GM10248 (cell line): ENCODE measurements at regions of chr5 and their contacts with region 1.

Region 1: DNA sequence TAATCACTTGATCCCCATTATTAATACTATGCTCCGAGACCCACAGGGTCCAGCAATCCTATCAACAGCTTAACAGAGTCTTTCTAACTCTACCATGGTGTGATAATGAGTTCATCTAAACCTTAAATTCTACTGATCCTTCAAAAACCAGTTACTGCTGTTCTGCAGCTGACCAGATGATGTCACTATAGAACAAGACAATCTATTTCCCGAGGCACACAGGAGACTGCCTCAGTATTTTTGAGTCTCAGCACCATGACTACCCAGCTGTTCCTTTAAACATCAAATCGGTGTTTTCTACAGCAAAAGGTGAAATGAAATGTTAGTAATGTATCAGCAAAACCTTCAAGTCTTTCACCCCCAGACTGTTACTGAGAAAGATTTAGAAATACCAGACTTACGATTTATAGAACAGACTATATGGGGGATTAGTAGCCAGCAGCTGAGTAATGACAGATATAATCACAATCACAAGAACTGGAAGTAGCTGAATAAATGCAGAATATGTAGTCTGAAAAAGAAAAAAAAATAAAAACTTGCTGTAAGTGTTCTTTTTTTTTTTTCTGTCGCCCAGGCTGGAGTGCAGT is 16.9 kb downstream of the DNAJC18 start:
- DNase-seq: peak; percentile 85
- CTCF ChIP-seq: peak; percentile 85

Region 2: GRCh38 chr5:139392678-139393496 is 29.5 kb before region 1 on chr5:
- CTCF ChIA-PET with region 1: interaction called, 11 read pairs
- POLR2A ChIA-PET with region 1: no interaction called
- DNase-seq: peak; percentile 88
- CTCF ChIP-seq: peak; percentile 94

Region 3: DNA sequence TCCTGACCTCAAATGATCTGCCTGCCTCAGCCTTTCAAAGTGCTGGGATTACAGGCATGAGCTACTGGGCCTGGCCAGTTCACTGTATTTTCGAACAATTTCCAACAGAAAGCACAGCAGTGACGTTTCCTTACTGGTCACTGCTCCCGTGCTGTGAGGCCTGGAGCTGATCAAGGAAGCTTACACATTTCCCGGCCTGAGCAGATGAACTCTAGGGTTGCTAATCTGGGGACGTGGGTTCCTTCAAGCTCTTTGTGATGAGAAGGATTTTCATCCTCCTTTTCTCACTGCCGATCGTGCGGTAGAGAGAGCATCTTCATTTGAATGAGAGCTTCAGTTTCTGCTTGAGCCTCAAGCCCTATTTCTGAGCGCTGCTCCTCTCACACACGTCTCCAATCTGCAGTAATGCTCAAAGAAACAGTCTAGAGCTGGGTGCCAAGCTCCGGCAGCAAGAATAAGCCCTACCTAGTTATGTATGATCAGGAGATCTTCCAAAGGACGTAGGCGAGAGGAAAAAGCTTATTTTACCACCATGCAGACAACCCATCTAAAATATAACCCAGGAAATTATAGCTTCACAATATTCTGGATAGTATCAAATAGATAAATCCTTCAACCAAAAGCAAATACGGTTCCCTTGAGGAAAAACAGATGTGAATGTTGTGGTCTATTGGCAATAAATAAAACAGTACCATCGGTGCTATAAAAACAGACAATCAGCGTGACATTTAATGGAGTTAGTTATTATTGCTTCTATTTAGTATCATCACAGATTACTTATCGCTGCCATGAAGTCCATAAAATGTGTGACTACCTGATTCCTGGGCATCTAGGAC is 11.2 kb before region 1 on chr5:
- CTCF ChIA-PET with region 1: interaction called, 34 read pairs
- POLR2A ChIA-PET with region 1: interaction called, 3 read pairs
- DNase-seq: no peak
- CTCF ChIP-seq: no peak

Region 4: GRCh38 chr5:139446956-139447779 is 24.8 kb after region 1 on chr5:
- CTCF ChIA-PET with region 1: interaction called, 14 read pairs
- POLR2A ChIA-PET with region 1: no interaction called
- DNase-seq: peak; percentile 38
- CTCF ChIP-seq: no peak

Region 5: DNA sequence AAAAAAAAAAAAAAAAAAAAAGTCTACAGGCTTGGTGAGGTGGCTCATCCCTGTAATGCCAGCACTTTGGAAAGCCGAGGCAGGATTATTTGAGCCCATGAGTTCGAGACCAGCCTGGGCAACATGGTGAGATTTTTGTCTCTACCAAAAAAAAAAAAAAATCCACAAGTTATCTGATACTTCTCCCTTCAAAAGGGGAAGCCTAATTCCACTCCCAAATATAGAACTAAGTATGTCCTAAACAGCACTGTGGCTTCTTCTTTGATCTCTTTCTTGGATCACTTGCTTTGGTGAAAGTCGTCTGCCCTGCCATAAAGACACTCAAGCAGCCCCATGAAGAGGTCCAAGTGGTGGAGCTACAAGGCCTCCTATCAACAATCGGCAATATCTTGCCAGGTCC is 79.0 kb after region 1 on chr5:
- CTCF ChIA-PET with region 1: interaction called, 13 read pairs
- POLR2A ChIA-PET with region 1: no interaction called
- DNase-seq: no peak
- CTCF ChIP-seq: no peak